ENCODE measurements at regions of chr14 and their contacts with region 1.

Region 1: DNA sequence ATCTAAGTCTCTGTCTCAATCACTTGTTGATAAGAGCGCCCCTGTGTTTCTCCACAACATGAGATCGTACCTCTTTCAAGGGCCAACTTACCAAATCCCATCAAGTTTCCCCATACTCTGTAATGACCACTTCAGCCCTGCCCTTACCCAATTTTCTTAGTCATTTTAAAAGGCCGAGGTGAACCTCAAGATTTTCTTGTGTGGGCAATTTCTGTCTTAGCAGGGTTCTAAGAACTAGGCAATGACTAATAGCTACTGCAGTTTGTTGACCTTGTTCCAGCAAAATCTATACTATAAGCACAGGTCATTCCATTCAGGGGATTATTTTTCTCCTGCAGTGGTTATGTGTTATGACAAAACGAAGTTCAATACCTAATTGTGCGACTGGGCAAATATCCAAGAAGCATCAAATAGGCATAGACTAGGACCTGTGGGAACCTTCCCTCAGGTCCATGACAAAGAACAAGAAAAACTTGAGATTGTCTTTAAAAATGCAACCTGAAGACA is 359.8 kb downstream of the PCNX1 start:
- DNase-seq: peak; percentile 49
- H3K4me3 Mint-ChIP-seq: peak overlapping the region; percentile 48
- H3K27ac Mint-ChIP-seq: peak overlapping the region; percentile 77
- H3K4me1 Mint-ChIP-seq: peaks cover 37% of the 10 kb centered on the region
- H3K27me3 Mint-ChIP-seq: no peaks in the 10 kb centered on the region

Region 2: GRCh38 chr14:71166180-71166790 is 100.8 kb before region 1 on chr14:
- CTCF ChIA-PET with region 1: no interaction called
- POLR2A ChIA-PET with region 1: no interaction called
- intact Hi-C with region 1: loop called (anchors 1 kb)
- DNase-seq: no peak
- H3K4me3 Mint-ChIP-seq: no peak overlapping the region
- H3K27ac Mint-ChIP-seq: no peak overlapping the region
- H3K4me1 Mint-ChIP-seq: peaks cover 16% of the 10 kb centered on the region
- H3K27me3 Mint-ChIP-seq: peaks cover 9% of the 10 kb centered on the region

Region 3: DNA sequence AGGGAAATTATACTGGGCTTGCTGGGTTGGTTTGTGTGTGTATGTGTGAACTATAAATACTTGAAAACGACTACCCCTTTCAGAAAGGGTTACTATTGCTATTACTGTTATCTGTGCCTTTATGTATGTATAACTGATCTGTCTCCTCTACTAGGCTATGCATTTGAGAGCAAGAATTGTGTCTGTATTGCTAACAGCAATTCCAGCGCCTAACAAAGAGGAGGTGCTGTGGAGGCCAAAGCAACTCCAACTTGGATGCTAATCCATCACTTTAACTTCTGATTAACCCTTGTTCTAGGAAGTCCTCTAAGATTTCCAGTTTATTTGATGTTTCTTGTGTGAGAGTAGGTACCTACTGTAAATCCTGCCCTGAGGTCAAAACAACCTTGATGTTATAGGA is 45.9 kb before region 1 on chr14:
- CTCF ChIA-PET with region 1: no interaction called
- POLR2A ChIA-PET with region 1: interaction called, 5 read pairs
- intact Hi-C with region 1: loop called (anchors 1 kb)
- DNase-seq: no peak
- H3K4me3 Mint-ChIP-seq: no peak overlapping the region
- H3K27ac Mint-ChIP-seq: no peak overlapping the region
- H3K4me1 Mint-ChIP-seq: peaks cover 24% of the 10 kb centered on the region
- H3K27me3 Mint-ChIP-seq: no peaks in the 10 kb centered on the region

Region 4: GRCh38 chr14:71290960-71291466 is 24.0 kb after region 1 on chr14:
- CTCF ChIA-PET with region 1: no interaction called
- POLR2A ChIA-PET with region 1: no interaction called
- intact Hi-C with region 1: loop called (anchors 1 kb)
- DNase-seq: peak; percentile 70
- H3K4me3 Mint-ChIP-seq: no peak overlapping the region
- H3K27ac Mint-ChIP-seq: peak overlapping the region; percentile 61
- H3K4me1 Mint-ChIP-seq: peaks cover 17% of the 10 kb centered on the region
- H3K27me3 Mint-ChIP-seq: no peaks in the 10 kb centered on the region

Region 5: GRCh38 chr14:71331403-71331802 is 64.3 kb after region 1 on chr14:
- CTCF ChIA-PET with region 1: no interaction called
- POLR2A ChIA-PET with region 1: no interaction called
- intact Hi-C with region 1: loop called (anchors 2 kb)
- DNase-seq: no peak
- H3K4me3 Mint-ChIP-seq: no peak overlapping the region
- H3K27ac Mint-ChIP-seq: peak overlapping the region; percentile 44
- H3K4me1 Mint-ChIP-seq: peaks cover 59% of the 10 kb centered on the region
- H3K27me3 Mint-ChIP-seq: no peaks in the 10 kb centered on the region